ENCODE measurements at regions of chr6 and their contacts with region 1.

Region 1: GRCh38 chr6:16783509-16783908 is 22.2 kb upstream of the ATXN1 start:
- DNase-seq: no peak
- ATAC-seq: no peak
- H3K4me3 ChIP-seq: no peak overlapping the region
- H3K27ac ChIP-seq: no peak overlapping the region
- H3K4me1 ChIP-seq: no peaks in the 10 kb centered on the region
- CTCF ChIP-seq: no peak
- EP300 ChIP-seq: no peak
- POLR2A ChIP-seq: no peak
- RAD21 ChIP-seq: no peak

Region 2: DNA sequence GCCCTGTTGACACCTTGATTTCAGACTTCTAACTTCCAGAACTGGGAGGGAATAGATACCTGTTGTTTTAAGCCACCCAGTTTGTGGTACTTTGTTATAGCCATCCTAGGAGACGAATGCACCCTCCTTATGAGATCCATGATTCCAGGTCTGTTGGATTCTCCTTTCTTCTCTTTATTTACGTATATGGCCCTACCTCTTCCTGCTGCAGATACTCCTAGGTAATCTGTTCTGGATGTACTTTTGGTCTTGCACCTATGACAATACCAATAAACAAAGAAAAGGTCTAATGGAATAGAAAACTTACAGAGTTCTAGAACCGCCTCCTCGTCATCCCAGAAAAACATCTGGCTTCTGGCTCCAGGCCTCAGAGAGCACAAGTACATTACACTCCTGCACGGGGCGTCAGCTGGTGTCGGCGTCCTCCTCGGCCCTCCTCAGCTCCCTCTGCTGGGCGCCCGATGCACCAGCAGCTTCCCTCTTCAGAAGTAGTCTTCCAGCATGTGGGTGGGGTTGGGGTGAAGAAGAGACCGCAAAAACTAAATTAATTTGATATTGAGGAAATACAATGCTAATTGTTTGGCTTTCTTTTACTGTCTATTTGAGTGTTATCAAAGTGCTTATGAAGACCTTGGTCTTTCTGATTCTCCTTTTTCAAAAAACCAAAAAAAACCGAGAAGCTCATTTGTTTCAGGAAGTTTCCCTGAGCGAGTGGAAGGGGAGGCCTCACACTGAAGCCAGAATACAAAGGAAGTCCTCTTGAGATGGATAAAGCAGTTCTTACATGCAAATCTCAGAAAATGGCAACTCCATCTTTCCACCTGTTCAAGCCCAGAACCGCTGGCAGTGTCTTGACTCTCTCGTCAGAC is 12.6 kb before region 1 on chr6:
- CTCF ChIA-PET with region 1: interaction called, 13 read pairs
- POLR2A ChIA-PET with region 1: no interaction called
- DNase-seq: peak; percentile 66 to 83
- ATAC-seq: peak; percentile 75 to 79
- H3K4me3 ChIP-seq: no peak overlapping the region
- H3K27ac ChIP-seq: peak overlapping the region; percentile 68 to 85
- H3K4me1 ChIP-seq: peaks cover 42% of the 10 kb centered on the region
- CTCF ChIP-seq: peak; percentile 57
- EP300 ChIP-seq: no peak
- POLR2A ChIP-seq: no peak
- RAD21 ChIP-seq: peak; percentile 54 to 67

Measured in A549 (cell line).